Activated naive CD4-positive, alpha-beta T cell treated with anti-CD3 and anti-CD28 coated beads for 36 hours (primary cell): ENCODE measurements at regions of chr16 and their contacts with region 1.

Region 1: GRCh38 chr16:3094289-3095027 is 4.6 kb downstream of the ZSCAN10 start:
- DNase-seq: peak; percentile 80
- H3K4me3 Mint-ChIP-seq: no peak overlapping the region
- H3K27ac Mint-ChIP-seq: no peak overlapping the region
- H3K4me1 Mint-ChIP-seq: peaks cover 23% of the 10 kb centered on the region
- H3K27me3 Mint-ChIP-seq: no peaks in the 10 kb centered on the region

Region 2: GRCh38 chr16:3074860-3075522 is 19.5 kb before region 1 on chr16:
- CTCF ChIA-PET with region 1: interaction called, 21 read pairs
- intact Hi-C with region 1: no loop called
- DNase-seq: peak; percentile 94
- H3K4me3 Mint-ChIP-seq: peak overlapping the region; percentile 71
- H3K27ac Mint-ChIP-seq: peak overlapping the region; percentile 98
- H3K4me1 Mint-ChIP-seq: peaks cover 77% of the 10 kb centered on the region
- H3K27me3 Mint-ChIP-seq: no peaks in the 10 kb centered on the region

Region 3: GRCh38 chr16:3080024-3080423 is 14.4 kb before region 1 on chr16:
- CTCF ChIA-PET with region 1: interaction called, 21 read pairs
- intact Hi-C with region 1: no loop called
- DNase-seq: no peak
- H3K4me3 Mint-ChIP-seq: no peak overlapping the region
- H3K27ac Mint-ChIP-seq: no peak overlapping the region
- H3K4me1 Mint-ChIP-seq: peaks cover 47% of the 10 kb centered on the region
- H3K27me3 Mint-ChIP-seq: no peaks in the 10 kb centered on the region

Region 4: DNA sequence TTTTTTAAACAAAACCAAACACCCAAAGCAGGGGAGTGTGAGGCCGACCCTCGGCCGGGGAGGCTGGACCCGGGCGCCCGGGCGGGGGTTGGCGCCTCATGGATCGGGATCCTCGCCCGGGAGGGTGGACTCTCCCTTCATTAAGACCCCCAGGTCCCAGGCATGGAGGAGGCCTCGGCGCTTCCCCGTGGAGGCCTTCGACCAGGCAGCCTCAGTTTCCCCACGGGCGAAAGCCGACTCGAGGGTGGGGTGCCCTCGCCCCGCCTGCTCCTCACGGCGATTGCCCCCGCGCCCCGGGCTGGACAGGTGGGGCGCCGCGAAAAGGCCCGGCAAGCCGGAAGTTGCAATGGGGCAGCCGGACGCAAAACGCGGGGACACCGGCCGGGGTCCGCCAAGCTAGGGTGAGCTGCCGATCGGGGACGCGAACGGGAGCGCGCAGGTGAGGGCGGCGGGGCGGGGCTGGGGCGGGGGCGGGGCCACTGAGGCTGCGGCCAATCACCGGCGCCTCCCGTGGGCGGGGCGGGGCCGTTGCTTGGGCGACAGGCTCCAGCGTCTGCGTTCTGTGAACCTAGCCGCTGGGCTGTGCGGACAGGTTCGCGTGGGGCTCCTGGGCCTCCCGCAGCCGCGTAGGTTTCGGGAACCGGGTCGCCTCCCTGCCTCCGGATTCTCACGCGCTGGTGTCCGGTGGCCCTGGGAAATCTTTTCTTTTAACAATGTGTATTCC is 11.9 kb after region 1 on chr16:
- CTCF ChIA-PET with region 1: interaction called, 11 read pairs
- intact Hi-C with region 1: no loop called
- DNase-seq: peak; percentile 93
- H3K4me3 Mint-ChIP-seq: peak overlapping the region; percentile 81
- H3K27ac Mint-ChIP-seq: peak overlapping the region; percentile 90
- H3K4me1 Mint-ChIP-seq: peaks cover 24% of the 10 kb centered on the region
- H3K27me3 Mint-ChIP-seq: no peaks in the 10 kb centered on the region

Region 5: DNA sequence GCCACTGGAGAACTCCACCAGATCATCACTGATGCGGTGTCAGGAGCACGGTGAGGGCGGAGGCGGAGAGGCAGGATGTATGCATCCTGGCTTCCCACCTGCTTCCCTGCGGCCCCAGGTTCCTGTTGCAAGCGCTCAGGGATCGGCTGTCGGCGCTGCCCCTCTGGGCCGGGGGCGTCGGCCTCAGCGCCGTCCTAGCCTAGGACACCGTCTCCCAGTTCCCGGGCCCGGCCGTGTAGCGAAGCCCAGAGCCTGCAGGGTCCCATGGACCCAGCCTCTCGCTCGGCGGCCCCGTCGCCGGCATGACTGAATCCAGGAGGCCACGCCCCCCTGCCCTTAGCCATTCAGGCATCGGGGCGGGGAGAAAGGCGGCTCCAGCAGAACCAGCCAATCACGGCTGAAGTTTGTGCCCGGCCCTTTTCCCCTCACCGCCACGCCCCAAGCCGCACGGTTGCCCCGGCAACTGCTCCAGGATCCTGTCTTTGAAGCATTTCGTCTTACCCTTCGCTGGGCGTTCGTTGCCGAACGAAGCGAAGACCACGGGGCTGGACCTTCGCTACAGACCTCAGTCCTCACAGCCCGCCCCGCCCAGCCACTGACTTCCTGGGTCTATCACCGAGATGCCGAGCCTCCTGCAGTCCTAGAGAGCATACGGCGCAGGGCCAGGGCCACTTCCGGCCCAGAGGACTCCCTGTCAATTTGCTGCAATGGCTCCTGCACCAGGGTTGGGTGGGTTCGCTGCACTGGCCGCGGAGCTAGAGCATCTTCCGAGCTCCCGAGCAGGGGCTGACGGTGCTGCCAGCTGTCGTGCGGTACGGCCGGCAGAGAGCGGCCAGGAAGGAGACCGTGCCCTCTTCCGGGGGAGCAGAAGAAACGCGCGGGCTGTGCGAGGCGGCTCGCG is 29.8 kb after region 1 on chr16:
- CTCF ChIA-PET with region 1: interaction called, 122 read pairs
- intact Hi-C with region 1: loop called (anchors 1 kb)
- DNase-seq: peak; percentile 98
- H3K4me3 Mint-ChIP-seq: peak overlapping the region; percentile 96
- H3K27ac Mint-ChIP-seq: peak overlapping the region; percentile 89
- H3K4me1 Mint-ChIP-seq: peaks cover 34% of the 10 kb centered on the region
- H3K27me3 Mint-ChIP-seq: no peaks in the 10 kb centered on the region

Region 6: DNA sequence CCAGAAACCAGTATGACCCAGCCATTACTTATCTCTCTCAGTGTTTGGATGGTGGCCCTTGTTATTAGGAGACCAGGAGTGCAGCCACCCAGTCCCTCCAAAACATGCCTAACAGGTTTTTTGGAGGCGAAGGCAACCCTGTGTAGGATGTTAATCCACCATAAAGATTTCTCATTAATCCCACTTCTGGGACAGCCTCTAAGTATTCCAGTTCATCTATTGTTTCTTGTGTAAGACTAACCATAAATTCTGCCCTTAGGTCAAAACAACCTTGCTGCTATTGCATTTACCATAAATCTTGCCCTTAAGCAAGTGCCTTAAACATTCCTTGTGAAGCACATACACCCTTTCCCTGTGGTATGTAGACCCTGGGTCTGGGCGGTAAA is 72.0 kb after region 1 on chr16:
- CTCF ChIA-PET with region 1: no interaction called
- intact Hi-C with region 1: loop called (anchors 1 kb)
- DNase-seq: no peak
- H3K4me3 Mint-ChIP-seq: no peak overlapping the region
- H3K27ac Mint-ChIP-seq: no peak overlapping the region
- H3K4me1 Mint-ChIP-seq: peaks cover 19% of the 10 kb centered on the region
- H3K27me3 Mint-ChIP-seq: peaks cover 12% of the 10 kb centered on the region